ENCODE measurements at regions of chr17 and their contacts with region 1.

Region 1: DNA sequence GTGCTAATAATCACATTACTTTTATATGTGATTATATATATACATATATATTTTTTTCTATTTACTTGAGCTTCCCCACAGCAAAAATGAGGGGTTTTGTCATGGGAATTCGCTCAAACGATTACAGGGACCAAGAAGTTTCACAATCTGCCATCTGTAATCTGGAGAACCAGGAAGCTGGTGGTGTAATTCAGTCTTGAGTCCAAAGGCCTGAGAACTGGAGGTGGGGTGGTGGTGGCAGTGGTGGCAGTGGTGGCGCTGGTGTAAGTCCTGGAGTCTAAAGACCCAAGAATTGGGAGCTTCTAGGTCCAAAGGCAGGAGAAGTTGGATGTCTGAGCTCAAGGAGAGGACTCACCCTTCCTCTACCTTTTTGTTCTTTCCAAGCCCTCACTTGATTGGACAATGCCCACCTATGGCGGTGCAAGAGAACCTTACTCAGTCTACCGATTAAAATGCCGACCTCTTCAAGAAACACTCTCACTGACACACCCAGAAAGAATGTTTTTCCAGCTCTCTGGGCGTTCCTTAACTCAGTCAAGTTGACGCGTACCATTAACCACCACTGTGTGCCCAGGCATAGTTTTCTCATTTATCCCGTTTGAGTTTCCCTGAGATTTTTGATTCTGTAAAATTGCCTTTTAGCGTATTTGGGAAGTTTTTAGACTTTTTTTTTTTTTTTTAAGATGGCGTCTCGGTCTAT is 31.9 kb downstream of the POLR2A start:
- DNase-seq: no peak
- H3K4me3 ChIP-seq: no peak overlapping the region
- CTCF ChIP-seq: no peak

Region 2: DNA sequence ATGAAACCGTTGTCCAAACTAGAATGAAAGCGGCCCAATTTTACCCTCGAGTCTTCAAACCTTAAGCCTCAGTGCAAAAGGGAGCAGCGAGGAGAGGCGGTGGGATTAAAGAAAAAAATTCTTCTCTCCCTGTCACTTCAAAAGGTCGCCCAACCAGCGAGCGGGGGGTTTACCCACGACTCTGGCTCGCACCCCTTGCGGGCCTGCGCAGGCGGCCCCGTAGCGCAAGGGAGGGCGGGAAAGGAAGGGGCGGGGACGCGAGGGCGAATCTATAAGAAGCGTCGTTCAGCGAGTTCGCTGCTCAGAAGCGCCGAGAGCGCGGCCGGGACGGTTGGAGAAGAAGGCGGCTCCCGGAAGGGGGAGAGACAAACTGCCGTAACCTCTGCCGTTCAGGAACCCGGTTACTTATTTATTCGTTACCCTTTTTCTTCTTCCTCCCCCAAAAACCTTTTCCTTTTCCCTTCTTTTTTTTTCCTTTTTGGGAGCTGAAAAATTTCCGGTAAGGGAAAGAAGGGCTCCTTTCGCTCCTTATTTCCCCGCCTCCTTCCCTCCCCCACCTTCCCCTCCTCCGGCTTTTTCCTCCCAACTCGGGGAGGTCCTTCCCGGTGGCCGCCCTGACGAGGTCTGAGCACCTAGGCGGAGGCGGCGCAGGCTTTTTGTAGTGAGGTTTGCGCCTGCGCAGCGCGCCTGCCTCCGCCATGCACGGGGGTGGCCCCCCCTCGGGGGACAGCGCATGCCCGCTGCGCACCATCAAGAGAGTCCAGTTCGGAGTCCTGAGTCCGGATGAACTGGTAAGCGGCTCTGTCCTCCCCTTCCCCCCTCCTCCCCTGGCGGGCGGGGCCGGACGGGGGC is 31.8 kb before region 1 on chr17 and contains the start of gene POLR2A:
- CTCF ChIA-PET with region 1: interaction called, 33 read pairs
- POLR2A ChIA-PET with region 1: interaction called, 10 read pairs
- DNase-seq: peak; percentile 87
- H3K4me3 ChIP-seq: peak within 1 kb of the TSS; percentile 87
- CTCF ChIP-seq: no peak

Region 3: DNA sequence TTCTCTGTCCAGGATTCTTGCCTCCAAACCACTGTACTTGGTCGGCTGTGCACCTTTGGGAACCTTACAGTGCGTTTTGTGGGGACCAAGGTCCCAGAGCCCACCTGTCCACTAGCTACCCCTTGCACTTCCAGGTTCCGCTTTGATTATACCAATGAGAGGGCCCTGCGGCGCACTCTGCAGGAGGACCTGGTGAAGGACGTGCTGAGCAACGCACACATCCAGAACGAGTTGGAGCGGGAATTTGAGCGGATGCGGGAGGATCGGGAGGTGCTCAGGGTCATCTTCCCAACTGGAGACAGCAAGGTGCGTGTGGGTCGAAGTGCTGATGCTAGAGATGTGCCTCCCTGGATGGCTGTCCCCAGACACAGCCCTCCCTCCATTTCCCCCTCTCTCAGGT is 13.1 kb before region 1 on chr17:
- CTCF ChIA-PET with region 1: interaction called, 63 read pairs
- POLR2A ChIA-PET with region 1: interaction called, 3 read pairs
- DNase-seq: no peak
- H3K4me3 ChIP-seq: no peak overlapping the region
- CTCF ChIP-seq: peak; percentile 16

Region 4: DNA sequence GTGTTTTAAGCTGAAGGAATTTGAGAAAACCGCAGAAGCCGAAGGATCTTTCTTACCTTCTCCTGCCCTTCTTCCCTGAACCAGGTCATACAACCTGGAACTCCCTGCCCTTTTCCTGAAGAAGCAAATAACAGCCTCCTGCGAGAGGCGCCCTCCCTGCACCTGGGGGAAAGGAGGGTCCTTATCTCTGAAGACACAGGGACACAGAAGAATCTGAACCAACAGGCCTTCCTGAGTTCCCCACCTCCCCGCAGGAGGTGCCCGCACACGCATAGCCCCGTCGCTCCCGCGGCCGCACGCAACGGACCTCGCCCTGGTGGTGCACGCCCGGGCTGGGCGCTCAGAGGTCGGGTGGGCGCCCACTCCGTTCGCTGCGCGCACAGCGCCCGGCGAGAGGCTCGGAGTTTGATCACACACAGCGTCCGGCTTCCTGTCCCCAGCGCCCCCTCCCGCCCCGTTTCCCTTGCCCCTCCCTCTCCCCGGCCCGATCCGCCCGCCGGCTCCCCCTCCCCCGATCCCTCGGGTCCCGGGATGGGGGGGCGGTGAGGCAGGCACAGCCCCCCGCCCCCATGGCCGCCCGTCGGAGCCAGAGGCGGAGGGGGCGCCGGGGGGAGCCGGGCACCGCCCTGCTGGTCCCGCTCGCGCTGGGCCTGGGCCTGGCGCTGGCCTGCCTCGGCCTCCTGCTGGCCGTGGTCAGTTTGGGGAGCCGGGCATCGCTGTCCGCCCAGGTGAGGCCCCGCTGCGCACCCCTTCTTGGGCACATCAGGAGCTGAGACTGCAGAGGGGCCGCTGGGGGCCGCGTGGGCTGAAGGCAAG is 32.7 kb after region 1 on chr17 and contains the start of gene TNFSF12:
- CTCF ChIA-PET with region 1: interaction called, 77 read pairs
- POLR2A ChIA-PET with region 1: no interaction called
- DNase-seq: no peak
- H3K4me3 ChIP-seq: peak within 1 kb of the TSS; percentile 70
- CTCF ChIP-seq: peak; percentile 44

Region 5: DNA sequence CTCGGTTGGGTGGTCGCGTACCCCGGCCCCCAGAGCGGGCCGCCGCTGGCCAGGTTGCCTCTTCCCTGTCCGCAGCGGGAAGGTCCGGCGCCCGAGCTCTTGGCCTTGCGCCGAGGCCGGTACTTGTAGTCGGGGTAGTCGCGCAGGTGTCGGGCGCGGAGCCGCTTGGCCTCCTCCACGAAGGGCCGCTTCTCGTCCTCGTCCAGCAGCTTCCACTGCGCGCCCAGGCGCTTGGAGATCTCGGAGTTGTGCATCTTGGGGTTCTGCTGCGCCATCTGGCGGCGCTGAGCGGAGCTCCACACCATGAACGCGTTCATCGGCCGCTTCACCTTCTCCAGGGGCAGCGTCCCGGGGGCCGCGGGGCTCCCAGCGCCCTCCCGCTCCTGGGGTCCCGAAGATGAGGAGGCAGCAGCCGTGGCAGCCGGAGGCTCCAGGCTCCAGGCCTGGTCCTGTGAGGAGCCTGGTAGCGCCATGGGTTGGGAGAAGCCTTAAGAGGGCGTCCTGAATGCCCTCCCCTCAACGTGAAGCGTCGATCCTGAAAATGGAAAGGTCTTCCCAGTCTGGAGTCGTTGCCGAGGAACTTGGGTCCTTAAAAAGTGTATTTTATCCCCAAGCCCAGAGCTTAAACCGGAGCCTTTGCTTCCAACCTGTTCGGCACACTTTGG is 73.3 kb after region 1 on chr17:
- CTCF ChIA-PET with region 1: interaction called, 50 read pairs
- POLR2A ChIA-PET with region 1: interaction called, 3 read pairs
- DNase-seq: no peak
- H3K4me3 ChIP-seq: peak overlapping the region; percentile 6; the same call in 1 of the 2 replicates
- CTCF ChIP-seq: peak; percentile 89

Region 6: DNA sequence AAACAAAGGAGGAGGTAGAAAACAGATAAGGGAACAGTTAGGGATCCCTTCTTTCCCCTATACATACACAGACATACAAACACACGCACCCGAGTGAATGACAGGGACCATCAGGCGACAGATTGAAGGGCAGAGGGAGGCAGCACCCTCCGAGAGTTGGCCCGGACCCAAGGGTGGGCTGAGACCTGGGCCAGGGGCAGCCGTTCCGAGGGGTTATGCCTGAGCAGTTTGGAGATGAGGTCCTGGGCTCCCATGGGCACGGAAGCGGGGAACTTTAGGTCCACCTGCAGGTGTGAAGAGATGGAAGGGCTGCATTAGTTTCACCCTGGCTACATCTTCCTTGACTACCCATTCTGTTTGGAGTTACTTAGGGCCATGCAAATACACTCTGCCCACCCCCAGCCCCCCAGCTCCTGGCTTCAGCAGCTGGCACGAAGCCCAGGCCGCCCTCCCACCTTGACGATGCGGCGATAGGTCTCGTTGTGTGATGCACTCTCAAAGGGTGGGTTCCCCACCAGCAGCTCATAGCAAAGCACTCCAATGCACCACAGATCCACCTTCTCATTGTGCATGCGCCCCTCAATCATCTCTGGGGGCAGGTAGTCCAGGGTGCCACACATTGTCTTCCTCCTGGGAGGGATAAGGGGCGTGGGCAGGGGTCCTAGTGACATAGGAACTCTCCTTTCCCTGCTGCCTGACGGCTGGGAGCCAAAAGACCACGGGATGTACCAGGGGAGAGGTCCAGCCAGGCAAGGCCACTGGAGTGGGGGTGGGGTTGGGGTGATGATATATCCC is 688.9 kb after region 1 on chr17:
- CTCF ChIA-PET with region 1: no interaction called
- POLR2A ChIA-PET with region 1: no interaction called
- DNase-seq: no peak
- H3K4me3 ChIP-seq: no peak overlapping the region
- CTCF ChIP-seq: no peak